ENCODE measurements at regions of chr15 and their contacts with region 1.

Region 1: DNA sequence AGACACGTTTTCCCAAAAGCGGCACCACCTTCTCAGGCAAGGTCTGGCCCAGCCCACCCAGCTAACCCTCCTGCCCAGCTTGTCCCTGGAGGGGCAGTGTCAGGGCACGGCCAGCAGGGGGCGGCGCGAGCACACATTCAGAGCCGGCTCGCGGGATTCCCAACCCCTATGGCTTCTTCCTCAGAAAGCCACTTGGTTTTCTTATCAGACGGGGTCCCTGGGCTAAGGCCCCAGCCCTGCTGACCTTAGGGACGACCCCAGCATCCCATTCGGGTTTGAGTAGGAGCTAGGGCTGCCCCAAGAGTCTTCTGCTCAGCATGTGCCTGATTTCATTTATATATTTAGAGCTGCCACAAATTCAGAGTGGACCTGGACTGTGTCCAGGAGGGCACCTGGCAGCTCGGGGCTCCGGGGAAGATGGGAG is 14.5 kb downstream of the RLBP1 start:
- DNase-seq: peak; percentile 84 to 91 (median 90)
- ATAC-seq: peak; percentile 97
- H3K4me3 ChIP-seq: no peak overlapping the region
- H3K27ac ChIP-seq: no peak overlapping the region
- H3K4me1 ChIP-seq: peaks cover 0 to 10% of the 10 kb centered on the region in 2 experiments; a peak in 2 of 5 replicates
- H3K27me3 ChIP-seq: peaks cover 6 to 15% of the 10 kb centered on the region in 2 experiments; a peak in 4 of 5 replicates
- CTCF ChIP-seq: peak; percentile 94 to 98 (median 95)
- EP300 ChIP-seq: no peak
- POLR2A ChIP-seq: no peak
- RAD21 ChIP-seq: peak; percentile 80 to 91

Region 2: GRCh38 chr15:89187976-89188514 is 18.9 kb before region 1 on chr15:
- CTCF ChIA-PET with region 1: no interaction called
- POLR2A ChIA-PET with region 1: no interaction called
- in situ Hi-C with region 1: no loop called
- intact Hi-C with region 1: no loop called
- DNase-seq: no peak
- ATAC-seq: no peak
- H3K4me3 ChIP-seq: no peak overlapping the region
- H3K27ac ChIP-seq: no peak overlapping the region
- H3K4me1 ChIP-seq: no peaks in the 10 kb centered on the region
- H3K27me3 ChIP-seq: no peaks in the 10 kb centered on the region
- CTCF ChIP-seq: no peak
- EP300 ChIP-seq: no peak
- POLR2A ChIP-seq: no peak
- RAD21 ChIP-seq: no peak

Region 3: DNA sequence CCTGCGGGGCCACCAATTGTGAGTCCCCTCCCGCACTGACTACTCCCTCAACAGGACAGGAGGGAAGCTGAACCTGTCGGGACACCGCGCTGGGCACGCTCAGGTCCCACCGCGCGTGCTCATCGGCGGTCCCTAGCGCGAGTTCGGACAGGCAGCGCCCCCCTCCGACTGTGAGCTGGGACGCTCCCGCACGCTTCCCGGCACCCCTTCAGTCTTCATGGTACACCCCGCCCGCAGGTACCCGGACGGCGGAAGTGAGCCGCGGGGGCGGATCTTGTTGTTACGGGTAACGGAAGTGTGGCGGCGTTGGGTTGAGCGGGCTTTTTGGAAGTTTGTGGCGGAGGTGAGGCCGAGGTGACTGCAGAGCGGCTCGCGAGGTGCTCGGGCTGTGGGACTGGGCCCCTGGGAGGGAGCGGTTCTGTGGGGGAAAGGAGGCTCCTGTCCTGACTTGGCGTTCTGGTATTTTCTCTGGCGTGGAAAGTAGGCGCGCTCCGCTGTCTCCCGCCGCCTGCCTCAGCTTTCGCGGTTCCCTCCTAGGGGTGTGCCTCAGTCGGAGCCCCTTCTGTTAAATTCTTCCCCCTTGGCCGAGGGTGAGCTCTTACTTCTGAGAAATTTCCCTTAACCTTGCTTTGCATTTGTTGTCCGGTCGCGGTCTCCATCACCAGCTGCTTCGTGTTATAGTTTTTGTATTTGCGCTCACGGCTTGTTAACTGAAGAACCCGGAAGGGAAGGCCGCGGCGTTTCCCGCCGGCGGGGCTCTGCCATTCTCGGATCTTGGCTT is 37.0 kb after region 1 on chr15 and contains the start of gene FANCI:
- CTCF ChIA-PET with region 1: interaction called, 8 read pairs
- POLR2A ChIA-PET with region 1: interaction called, 4 read pairs
- in situ Hi-C with region 1: no loop called
- intact Hi-C with region 1: loop called (anchors 1 kb)
- DNase-seq: peak; percentile 96 to 98 (median 96)
- ATAC-seq: peak; percentile 96
- H3K4me3 ChIP-seq: peak within 1 kb of the TSS; percentile 56
- H3K27ac ChIP-seq: peak within 1 kb of the TSS; percentile 76
- H3K4me1 ChIP-seq: peaks cover 14 to 15% of the 10 kb centered on the region in 2 experiments; a peak in 4 of 5 replicates
- H3K27me3 ChIP-seq: no peaks in the 10 kb centered on the region
- CTCF ChIP-seq: peak; percentile 70 to 94 (median 90)
- EP300 ChIP-seq: peak; percentile 41; the same call in 1 of the 2 replicates
- POLR2A ChIP-seq: peak; percentile 89
- RAD21 ChIP-seq: peak; percentile 71 to 81
- polyA plus RNA-seq, gene FANCI: 76.0 to 137 TPM

Region 4: DNA sequence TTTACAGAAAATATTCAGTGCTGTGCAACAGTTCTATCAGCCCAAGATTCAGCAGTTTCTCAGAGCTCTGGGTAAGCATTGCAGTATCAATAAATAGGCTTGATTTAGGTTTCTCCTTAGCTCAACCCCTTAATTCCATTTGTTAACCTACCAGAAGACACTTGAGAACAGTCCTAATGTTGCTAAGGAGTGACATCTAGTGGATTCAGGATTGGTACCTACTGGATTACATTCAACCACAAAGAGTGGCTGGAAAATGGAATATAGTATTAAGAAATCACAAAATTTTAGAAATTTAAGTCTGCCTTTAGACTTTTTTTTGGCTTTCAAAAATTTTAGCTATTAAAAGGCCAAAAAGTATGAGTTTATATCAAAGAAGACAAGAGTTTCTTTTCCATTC is 93.0 kb after region 1 on chr15:
- CTCF ChIA-PET with region 1: interaction called, 17 read pairs
- POLR2A ChIA-PET with region 1: interaction called, 3 read pairs
- in situ Hi-C with region 1: no loop called
- intact Hi-C with region 1: loop called (anchors 5 kb)
- DNase-seq: no peak
- ATAC-seq: peak; percentile 64
- H3K4me3 ChIP-seq: no peak overlapping the region
- H3K27ac ChIP-seq: no peak overlapping the region
- H3K4me1 ChIP-seq: no peaks in the 10 kb centered on the region; a peak in 1 of 5 replicates
- H3K27me3 ChIP-seq: no peaks in the 10 kb centered on the region
- CTCF ChIP-seq: peak in 1 of 3 experiments; percentile 26; a peak in 2 of 6 replicates
- EP300 ChIP-seq: no peak
- POLR2A ChIP-seq: no peak
- RAD21 ChIP-seq: 0 out of 4 replicates have a peak, but pooled peaks of 1 of the 2 experiments have one; percentile 33

Region 5: DNA sequence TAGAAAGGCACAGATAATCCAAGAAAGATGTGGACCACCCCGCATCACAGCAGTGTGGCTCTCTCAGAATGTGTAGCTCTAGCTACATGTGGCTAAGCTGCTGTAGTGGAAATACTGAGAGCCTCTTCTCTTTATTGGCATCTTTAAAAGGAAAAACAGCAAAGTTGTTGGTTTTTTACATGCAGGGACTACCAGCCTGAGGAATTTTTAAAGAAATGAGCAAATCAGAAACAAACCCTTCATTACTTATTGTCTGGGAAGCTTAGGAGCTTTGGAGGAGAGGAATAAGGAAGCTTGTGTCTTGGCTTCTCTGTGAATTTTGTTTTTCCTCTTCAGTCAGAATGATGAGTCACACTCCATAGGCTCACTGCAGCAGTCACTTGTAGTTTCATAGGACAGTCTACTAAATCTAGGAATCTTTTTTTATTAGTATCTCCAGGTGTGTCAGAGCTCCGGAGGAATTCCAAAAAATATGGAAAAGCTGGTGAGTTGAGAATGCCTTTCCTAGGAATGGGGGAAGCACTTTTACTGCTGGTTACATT is 100.2 kb after region 1 on chr15:
- CTCF ChIA-PET with region 1: no interaction called
- POLR2A ChIA-PET with region 1: interaction called, 3 read pairs
- in situ Hi-C with region 1: no loop called
- intact Hi-C with region 1: loop called (anchors 5 kb)
- DNase-seq: no peak
- ATAC-seq: no peak
- H3K4me3 ChIP-seq: no peak overlapping the region
- H3K27ac ChIP-seq: no peak overlapping the region
- H3K4me1 ChIP-seq: peaks cover 0 to 6% of the 10 kb centered on the region in 2 experiments; a peak in 2 of 5 replicates
- H3K27me3 ChIP-seq: no peaks in the 10 kb centered on the region
- CTCF ChIP-seq: no peak
- EP300 ChIP-seq: no peak
- POLR2A ChIP-seq: no peak
- RAD21 ChIP-seq: no peak

Measured in K562 (cell line).